Activated CD8-positive, alpha-beta T cell treated with anti-CD3 and anti-CD28 coated beads, Interleukin-2, amount 10 ng/mL, durations not matched to agents 7 days and 5 days (primary cell): ENCODE measurements at regions of chr17 and their contacts with region 1.

Region 1: GRCh38 chr17:2386400-2387085 is 14.3 kb downstream of the MNT start:
- DNase-seq: no peak
- ATAC-seq: no peak
- H3K4me3 Mint-ChIP-seq: no peak overlapping the region
- H3K27ac Mint-ChIP-seq: no peak overlapping the region
- H3K4me1 Mint-ChIP-seq: peaks cover 35% of the 10 kb centered on the region
- H3K27me3 Mint-ChIP-seq: no peaks in the 10 kb centered on the region

Region 2: DNA sequence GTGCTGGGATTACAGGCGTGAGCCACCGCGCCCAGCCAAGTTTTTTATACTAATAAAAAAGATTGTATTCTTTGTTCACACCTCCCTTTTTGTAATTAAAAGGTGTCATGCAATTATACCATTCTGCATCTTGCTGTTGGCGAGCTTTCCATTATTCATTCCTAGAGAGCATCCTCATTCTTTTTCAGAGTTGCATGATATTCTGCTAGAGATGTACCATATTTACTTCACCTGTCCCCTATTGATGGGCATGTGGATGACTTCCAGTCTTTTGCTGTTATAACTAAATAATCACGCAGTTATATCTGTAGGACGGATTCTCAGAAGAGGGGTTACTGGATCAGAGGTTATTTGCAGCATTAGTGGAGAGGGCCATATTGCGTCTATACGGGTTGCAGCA is 32.2 kb before region 1 on chr17:
- CTCF ChIA-PET with region 1: interaction called, 15 read pairs
- POLR2A ChIA-PET with region 1: no interaction called
- DNase-seq: no peak
- ATAC-seq: no peak
- H3K4me3 Mint-ChIP-seq: no peak overlapping the region
- H3K27ac Mint-ChIP-seq: peak overlapping the region; percentile 96
- H3K4me1 Mint-ChIP-seq: peaks cover 19% of the 10 kb centered on the region
- H3K27me3 Mint-ChIP-seq: no peaks in the 10 kb centered on the region

Region 3: DNA sequence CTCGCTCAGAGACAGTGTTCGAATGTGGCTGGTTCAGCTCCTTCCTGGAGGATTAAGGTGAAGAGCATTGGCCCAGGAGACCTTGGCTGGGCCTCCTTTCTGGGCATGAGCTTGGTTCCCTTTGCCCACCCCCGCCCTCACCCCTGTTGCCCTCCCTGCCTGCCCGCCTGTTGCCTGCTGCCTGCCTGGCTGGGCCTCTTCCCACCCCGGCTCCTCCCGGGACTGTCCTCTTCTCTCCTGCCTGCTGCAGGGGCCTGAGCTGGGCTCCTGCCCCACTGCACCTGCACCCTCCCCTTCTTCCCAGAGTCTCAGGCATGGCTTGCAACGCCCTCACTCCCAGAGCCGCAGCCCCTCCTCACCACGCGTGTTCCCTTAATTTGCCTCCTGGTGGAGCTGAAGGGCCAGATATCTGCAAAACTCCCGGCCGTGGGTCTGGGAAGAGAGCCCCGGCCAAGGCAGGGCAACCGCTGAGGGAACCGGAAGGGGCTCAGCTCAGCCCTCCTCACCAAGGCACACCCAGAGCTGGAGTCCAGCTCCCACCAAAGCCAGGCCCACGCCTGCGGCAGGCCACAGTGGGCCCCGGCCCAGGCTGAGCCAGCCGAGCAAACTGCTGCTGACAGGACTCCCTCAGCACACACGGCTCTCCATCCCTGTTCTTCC is 16.9 kb before region 1 on chr17:
- CTCF ChIA-PET with region 1: interaction called, 27 read pairs
- POLR2A ChIA-PET with region 1: no interaction called
- DNase-seq: no peak
- ATAC-seq: no peak
- H3K4me3 Mint-ChIP-seq: no peak overlapping the region
- H3K27ac Mint-ChIP-seq: no peak overlapping the region
- H3K4me1 Mint-ChIP-seq: no peaks in the 10 kb centered on the region
- H3K27me3 Mint-ChIP-seq: no peaks in the 10 kb centered on the region

Region 4: GRCh38 chr17:2401426-2402221 is 15.1 kb after region 1 on chr17:
- CTCF ChIA-PET with region 1: interaction called, 112 read pairs
- POLR2A ChIA-PET with region 1: interaction called, 25 read pairs
- DNase-seq: peak; percentile 100
- ATAC-seq: peak; percentile 62
- H3K4me3 Mint-ChIP-seq: peak overlapping the region; percentile 94
- H3K27ac Mint-ChIP-seq: peak overlapping the region; percentile 100
- H3K4me1 Mint-ChIP-seq: peaks cover 55% of the 10 kb centered on the region
- H3K27me3 Mint-ChIP-seq: no peaks in the 10 kb centered on the region

Region 5: GRCh38 chr17:2421315-2422147 is 35.0 kb after region 1 on chr17:
- CTCF ChIA-PET with region 1: interaction called, 479 read pairs
- POLR2A ChIA-PET with region 1: interaction called, 30 read pairs
- DNase-seq: no peak
- ATAC-seq: no peak
- H3K4me3 Mint-ChIP-seq: no peak overlapping the region
- H3K27ac Mint-ChIP-seq: no peak overlapping the region
- H3K4me1 Mint-ChIP-seq: peaks cover 2% of the 10 kb centered on the region
- H3K27me3 Mint-ChIP-seq: no peaks in the 10 kb centered on the region

Region 6: GRCh38 chr17:2680961-2681360 is 294.4 kb after region 1 on chr17:
- CTCF ChIA-PET with region 1: interaction called, 14 read pairs
- POLR2A ChIA-PET with region 1: no interaction called
- DNase-seq: no peak
- ATAC-seq: no peak
- H3K4me3 Mint-ChIP-seq: no peak overlapping the region
- H3K27ac Mint-ChIP-seq: no peak overlapping the region
- H3K4me1 Mint-ChIP-seq: no peaks in the 10 kb centered on the region
- H3K27me3 Mint-ChIP-seq: no peaks in the 10 kb centered on the region